Prostate gland (tissue), 2 donors: ENCODE measurements at regions of chrX and their contacts with region 1.

Region 1: GRCh38 chrX:110795645-110796406 is at the start of gene CHRDL1:
- DNase-seq: peak; percentile 9
- H3K4me3 ChIP-seq: peak within 1 kb of the TSS; percentile 23 to 31
- H3K27ac ChIP-seq: no peak within 1 kb of the TSS
- H3K4me1 ChIP-seq: no peaks in the 10 kb centered on the region
- H3K27me3 ChIP-seq: no peaks in the 10 kb centered on the region
- CTCF ChIP-seq: no peak
- POLR2A ChIP-seq: no peak
- total RNA-seq, gene CHRDL1: 49.1 to 61.4 TPM

Region 2: GRCh38 chrX:110699109-110699508 is 96.7 kb before region 1 on chrX:
- intact Hi-C with region 1: loop called (anchors 10 kb)
- DNase-seq: no peak
- H3K4me3 ChIP-seq: no peak overlapping the region
- H3K27ac ChIP-seq: no peak overlapping the region
- H3K4me1 ChIP-seq: no peaks in the 10 kb centered on the region
- H3K27me3 ChIP-seq: no peaks in the 10 kb centered on the region
- CTCF ChIP-seq: no peak
- POLR2A ChIP-seq: no peak

Region 3: GRCh38 chrX:110745288-110745687 is 50.5 kb before region 1 on chrX:
- intact Hi-C with region 1: loop called (anchors 5 kb)
- DNase-seq: no peak
- H3K4me3 ChIP-seq: no peak overlapping the region
- H3K27ac ChIP-seq: no peak overlapping the region
- H3K4me1 ChIP-seq: no peaks in the 10 kb centered on the region
- H3K27me3 ChIP-seq: no peaks in the 10 kb centered on the region
- CTCF ChIP-seq: no peak
- POLR2A ChIP-seq: no peak

Region 4: DNA sequence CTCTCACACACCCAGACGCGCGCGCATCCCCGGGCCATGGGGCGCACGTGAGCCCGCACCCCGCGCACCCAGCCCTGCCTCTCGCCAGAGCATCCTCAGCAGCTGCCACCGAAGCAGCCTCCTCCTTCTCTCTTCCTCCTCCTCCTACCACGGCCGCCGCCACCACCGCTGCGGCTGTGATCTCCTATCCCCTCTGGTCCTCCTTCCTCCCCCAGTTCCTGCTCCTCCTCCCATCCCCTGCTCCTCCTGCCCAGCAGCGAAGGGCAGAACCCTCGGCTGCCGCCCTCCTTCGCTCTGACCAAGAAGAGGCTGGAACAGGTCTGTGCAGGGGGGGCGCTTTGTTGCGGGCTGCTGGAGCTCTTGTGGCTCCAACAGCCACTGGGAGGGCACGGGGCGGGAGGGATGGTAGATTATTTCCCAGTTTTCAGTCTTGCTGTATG is 148.5 kb after region 1 on chrX:
- intact Hi-C with region 1: no loop called
- DNase-seq: peak; percentile 5
- H3K4me3 ChIP-seq: peak overlapping the region; percentile 19 to 23
- H3K27ac ChIP-seq: peak overlapping the region; percentile 47 to 51
- H3K4me1 ChIP-seq: no peaks in the 10 kb centered on the region
- H3K27me3 ChIP-seq: no peaks in the 10 kb centered on the region
- CTCF ChIP-seq: no peak
- POLR2A ChIP-seq: no peak